GM10248 (cell line): ENCODE measurements at regions of chr2 and their contacts with region 1.

Region 1: DNA sequence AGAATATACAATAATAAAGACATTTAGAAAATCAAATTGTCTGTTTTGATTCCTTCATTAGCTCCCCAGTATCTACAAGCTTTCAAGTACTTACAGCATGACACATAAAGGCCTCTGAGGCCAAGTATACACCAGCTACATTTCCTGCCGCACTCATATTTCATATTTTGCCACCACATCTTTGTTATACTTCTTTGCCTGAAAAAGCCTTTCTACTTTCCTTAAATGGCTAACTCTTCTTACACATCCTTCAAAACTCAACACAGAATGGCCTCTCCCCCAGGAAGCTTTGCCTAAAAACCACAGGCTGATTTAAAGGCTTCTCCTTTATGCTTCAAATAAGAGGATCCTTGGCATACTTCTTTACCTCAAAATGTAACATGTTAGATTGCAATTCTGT is 4.5 kb downstream of the STK17B start:
- DNase-seq: no peak
- CTCF ChIP-seq: no peak

Region 2: GRCh38 chr2:196145256-196145655 is 21.6 kb before region 1 on chr2:
- CTCF ChIA-PET with region 1: no interaction called
- POLR2A ChIA-PET with region 1: no interaction called
- DNase-seq: no peak
- CTCF ChIP-seq: no peak

Region 3: GRCh38 chr2:196238836-196239380 is 72.0 kb after region 1 on chr2:
- CTCF ChIA-PET with region 1: no interaction called
- POLR2A ChIA-PET with region 1: no interaction called
- DNase-seq: no peak
- CTCF ChIP-seq: no peak

Region 4: GRCh38 chr2:196249860-196250259 is 83.0 kb after region 1 on chr2:
- CTCF ChIA-PET with region 1: no interaction called
- POLR2A ChIA-PET with region 1: interaction called, 10 read pairs
- DNase-seq: peak; percentile 36
- CTCF ChIP-seq: peak; percentile 8